A549 (cell line): ENCODE measurements at regions of chr9 and their contacts with region 1.

Region 1: DNA sequence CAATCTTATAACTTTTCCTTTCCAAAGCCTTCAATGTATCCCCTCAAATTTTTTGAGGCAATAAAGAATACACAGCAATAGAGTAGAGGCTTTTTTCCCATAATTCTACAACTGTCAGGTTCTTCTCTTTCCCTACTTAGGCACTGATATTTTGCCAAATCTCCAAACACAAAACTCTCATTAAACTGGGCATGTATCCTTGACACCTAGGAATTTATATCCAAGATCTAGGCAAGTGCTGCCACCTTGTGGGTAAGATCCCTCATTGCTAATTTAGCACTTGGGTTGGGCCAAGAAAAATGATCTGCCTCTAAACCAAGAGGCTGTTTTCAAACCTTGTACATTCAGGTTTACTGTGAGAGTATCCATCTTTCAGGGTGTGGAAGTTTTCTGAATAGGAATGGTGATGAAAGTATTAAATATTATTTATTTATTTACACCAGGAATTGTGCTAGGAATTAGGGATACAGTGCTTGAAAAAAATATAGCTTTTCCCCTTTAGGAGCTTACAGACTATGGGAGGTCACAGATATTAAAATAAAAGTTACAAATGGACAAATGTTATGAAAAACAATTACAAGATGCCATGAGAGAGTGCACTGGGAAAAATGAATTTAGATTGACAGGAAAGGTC is 17.6 kb downstream of the TSTD2 start:
- DNase-seq: peak; percentile 64 to 69
- ATAC-seq: peak; percentile 68 to 84; a peak in 4 of 6 replicates
- H3K4me3 ChIP-seq: no peak overlapping the region
- H3K27ac ChIP-seq: no peak overlapping the region
- H3K4me1 ChIP-seq: no peaks in the 10 kb centered on the region
- CTCF ChIP-seq: peak; percentile 88
- EP300 ChIP-seq: no peak
- POLR2A ChIP-seq: no peak
- RAD21 ChIP-seq: peak; percentile 74 to 81

Region 2: DNA sequence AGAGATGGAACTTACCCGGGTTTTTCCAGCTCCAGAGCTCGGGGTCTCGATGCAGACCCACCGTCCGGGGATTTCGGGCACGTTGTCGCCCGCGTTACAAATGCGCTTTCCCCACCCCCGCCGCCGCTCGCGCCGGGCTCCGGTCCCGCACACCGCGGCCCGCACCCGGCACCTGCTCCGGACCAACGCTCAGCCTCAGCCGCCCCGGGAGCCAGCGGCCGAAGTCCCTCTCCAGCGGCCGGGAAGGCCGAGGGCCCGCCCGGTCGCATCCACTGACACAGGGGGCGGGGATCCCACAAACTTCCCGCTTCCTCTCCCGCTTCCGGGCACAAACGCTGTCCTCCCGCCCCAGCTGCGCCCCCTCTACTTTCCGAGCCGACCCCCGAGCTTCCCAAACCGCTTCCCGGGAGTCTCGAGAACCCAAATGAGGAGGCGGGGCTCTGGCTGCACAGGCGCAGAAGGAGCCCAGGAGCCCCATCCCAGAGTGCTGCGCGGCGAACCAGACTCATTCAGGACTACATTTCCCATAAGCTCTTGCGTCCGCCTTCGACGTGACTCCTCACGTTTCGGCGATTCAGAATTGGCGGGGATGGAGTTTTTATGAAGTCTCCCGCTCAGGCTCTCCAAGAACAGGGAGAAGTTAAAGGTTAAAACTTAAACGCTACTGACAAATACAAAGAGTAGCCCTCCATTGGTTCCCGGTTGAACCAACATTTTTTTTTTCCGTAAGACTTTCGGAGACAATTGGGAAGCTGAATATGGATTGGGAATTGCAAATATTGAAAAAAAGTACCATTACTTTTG is 761.3 kb before region 1 on chr9 and contains the start of gene ZNF782:
- CTCF ChIA-PET with region 1: interaction called, 11 read pairs
- POLR2A ChIA-PET with region 1: no interaction called
- DNase-seq: peak; percentile 83 to 95
- ATAC-seq: peak; percentile 94 to 99
- H3K4me3 ChIP-seq: peak within 1 kb of the TSS; percentile 65
- H3K27ac ChIP-seq: peak within 1 kb of the TSS; percentile 69 to 89
- H3K4me1 ChIP-seq: no peaks in the 10 kb centered on the region; the same call in 2 of the 3 replicates
- CTCF ChIP-seq: no peak
- EP300 ChIP-seq: no peak
- POLR2A ChIP-seq: peak; percentile 65
- RAD21 ChIP-seq: no peak
- polyA plus RNA-seq, gene ZNF782: 2.1 and 2.7 TPM in 2 replicates

Region 3: GRCh38 chr9:97406620-97407177 is 208.9 kb before region 1 on chr9:
- CTCF ChIA-PET with region 1: interaction called, 15 read pairs
- POLR2A ChIA-PET with region 1: no interaction called
- DNase-seq: no peak
- ATAC-seq: no peak
- H3K4me3 ChIP-seq: no peak overlapping the region
- H3K27ac ChIP-seq: no peak overlapping the region
- H3K4me1 ChIP-seq: no peaks in the 10 kb centered on the region
- CTCF ChIP-seq: no peak
- EP300 ChIP-seq: no peak
- POLR2A ChIP-seq: no peak
- RAD21 ChIP-seq: no peak

Region 4: DNA sequence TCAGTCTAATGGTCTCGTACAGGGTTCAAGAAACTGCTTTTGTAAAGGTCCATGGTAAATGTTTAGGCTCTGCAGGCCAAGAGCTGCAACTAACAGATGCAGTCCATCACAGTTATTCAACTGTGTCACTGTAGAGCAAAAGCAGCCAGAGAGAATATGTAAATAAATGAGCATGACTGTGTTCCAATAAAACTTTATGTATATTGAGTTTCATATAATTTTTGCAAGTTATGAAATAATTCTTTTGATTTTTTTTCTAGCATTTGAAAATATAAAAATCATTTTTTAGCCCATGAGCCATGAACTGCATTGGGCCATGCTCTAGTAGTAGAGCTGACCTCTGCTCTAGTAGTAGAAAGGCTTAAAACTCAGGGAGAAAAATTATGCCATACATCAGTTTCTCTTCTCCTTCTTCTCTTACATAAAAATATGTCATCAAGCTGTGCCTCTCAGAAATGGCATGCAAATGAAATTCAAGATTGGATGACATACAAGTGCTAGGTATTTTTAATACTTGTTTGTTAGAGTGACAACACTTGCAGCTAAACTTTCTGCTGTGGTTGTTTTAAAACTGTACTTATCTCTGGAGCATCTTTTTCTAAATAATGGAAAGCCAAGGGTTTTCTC is 156.3 kb before region 1 on chr9:
- CTCF ChIA-PET with region 1: interaction called, 31 read pairs
- POLR2A ChIA-PET with region 1: no interaction called
- DNase-seq: no peak
- ATAC-seq: no peak
- H3K4me3 ChIP-seq: no peak overlapping the region
- H3K27ac ChIP-seq: no peak overlapping the region
- H3K4me1 ChIP-seq: no peaks in the 10 kb centered on the region
- CTCF ChIP-seq: no peak
- EP300 ChIP-seq: no peak
- POLR2A ChIP-seq: no peak
- RAD21 ChIP-seq: no peak

Region 5: DNA sequence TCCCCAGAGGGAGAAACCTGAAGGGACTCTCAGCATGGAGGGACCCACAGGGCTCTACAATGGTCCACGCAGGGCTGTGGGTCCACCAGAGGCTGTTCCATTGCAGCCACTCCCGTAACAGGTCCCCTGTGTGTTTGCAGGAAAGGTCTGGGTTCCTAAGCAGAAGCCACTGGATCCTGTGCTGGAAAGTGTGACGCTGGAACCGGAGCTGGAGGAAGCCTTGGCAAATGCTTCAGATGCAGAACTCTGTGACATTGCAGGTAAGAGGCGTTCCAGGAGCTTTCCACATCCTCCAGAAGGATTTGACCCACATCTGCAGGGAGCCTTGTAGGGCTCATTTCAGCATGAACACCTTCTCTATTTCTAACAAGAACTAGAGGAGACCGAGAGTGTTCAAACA is 62.4 kb before region 1 on chr9:
- CTCF ChIA-PET with region 1: no interaction called
- POLR2A ChIA-PET with region 1: no interaction called
- DNase-seq: no peak
- ATAC-seq: no peak
- H3K4me3 ChIP-seq: no peak overlapping the region
- H3K27ac ChIP-seq: no peak overlapping the region
- H3K4me1 ChIP-seq: no peaks in the 10 kb centered on the region
- CTCF ChIP-seq: no peak
- EP300 ChIP-seq: no peak
- POLR2A ChIP-seq: no peak
- RAD21 ChIP-seq: no peak

Region 6: GRCh38 chr9:97575673-97576200 is 39.8 kb before region 1 on chr9:
- CTCF ChIA-PET with region 1: interaction called, 11 read pairs
- POLR2A ChIA-PET with region 1: no interaction called
- DNase-seq: no peak
- ATAC-seq: no peak
- H3K4me3 ChIP-seq: no peak overlapping the region
- H3K27ac ChIP-seq: no peak overlapping the region
- H3K4me1 ChIP-seq: no peaks in the 10 kb centered on the region
- CTCF ChIP-seq: no peak
- EP300 ChIP-seq: no peak
- POLR2A ChIP-seq: no peak
- RAD21 ChIP-seq: no peak

Region 7: DNA sequence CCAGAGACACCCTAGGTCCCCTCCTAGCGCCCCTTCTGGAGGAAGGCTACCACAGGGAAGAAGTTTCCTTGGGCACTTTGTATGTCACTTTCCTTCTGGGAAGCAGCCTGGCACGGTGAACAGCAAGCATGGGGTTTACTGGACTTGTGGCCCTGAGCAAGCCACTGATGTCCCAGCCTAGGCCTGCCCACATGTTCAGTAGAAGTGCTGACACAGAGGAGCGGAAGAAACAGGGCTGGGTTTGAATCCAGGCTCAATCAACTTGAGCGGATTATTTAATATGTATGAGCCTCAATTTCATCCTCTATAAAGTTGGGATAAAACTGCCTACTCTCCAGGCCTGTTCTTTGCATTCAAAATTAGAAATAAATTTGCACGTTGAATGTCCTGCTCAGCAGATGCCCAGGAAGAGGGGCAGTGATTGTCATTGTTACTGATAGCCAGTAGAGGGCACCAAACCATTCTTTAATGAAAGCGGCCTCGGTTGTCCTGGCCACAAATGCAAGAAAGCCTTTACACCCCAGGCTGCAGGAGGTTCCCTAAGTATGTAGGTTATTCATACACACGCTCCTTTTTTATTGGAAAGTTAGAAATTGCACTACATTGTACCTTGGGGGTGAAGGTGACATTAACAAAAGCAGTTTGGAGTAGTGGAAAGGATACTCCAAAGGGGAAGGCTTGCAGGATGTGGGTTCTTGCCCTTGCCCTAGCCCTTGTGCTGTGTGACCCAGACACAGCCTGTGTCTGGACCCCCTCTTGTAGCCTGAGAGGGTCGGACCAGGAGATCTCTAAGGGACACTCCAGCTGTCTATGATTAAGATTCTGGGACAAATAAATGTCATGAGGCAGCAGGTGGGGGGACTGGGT is 95.0 kb after region 1 on chr9:
- CTCF ChIA-PET with region 1: no interaction called
- POLR2A ChIA-PET with region 1: no interaction called
- DNase-seq: peak; percentile 75 to 86
- ATAC-seq: peak; percentile 94 to 95
- H3K4me3 ChIP-seq: no peak overlapping the region
- H3K27ac ChIP-seq: peak overlapping the region; percentile 18 to 54; a peak in 3 of 6 replicates
- H3K4me1 ChIP-seq: peaks cover 20% of the 10 kb centered on the region
- CTCF ChIP-seq: peak; percentile 82
- EP300 ChIP-seq: no peak
- POLR2A ChIP-seq: no peak
- RAD21 ChIP-seq: peak; percentile 93 to 94